ENCODE measurements at regions of chr2 and their contacts with region 1.

Region 1: DNA sequence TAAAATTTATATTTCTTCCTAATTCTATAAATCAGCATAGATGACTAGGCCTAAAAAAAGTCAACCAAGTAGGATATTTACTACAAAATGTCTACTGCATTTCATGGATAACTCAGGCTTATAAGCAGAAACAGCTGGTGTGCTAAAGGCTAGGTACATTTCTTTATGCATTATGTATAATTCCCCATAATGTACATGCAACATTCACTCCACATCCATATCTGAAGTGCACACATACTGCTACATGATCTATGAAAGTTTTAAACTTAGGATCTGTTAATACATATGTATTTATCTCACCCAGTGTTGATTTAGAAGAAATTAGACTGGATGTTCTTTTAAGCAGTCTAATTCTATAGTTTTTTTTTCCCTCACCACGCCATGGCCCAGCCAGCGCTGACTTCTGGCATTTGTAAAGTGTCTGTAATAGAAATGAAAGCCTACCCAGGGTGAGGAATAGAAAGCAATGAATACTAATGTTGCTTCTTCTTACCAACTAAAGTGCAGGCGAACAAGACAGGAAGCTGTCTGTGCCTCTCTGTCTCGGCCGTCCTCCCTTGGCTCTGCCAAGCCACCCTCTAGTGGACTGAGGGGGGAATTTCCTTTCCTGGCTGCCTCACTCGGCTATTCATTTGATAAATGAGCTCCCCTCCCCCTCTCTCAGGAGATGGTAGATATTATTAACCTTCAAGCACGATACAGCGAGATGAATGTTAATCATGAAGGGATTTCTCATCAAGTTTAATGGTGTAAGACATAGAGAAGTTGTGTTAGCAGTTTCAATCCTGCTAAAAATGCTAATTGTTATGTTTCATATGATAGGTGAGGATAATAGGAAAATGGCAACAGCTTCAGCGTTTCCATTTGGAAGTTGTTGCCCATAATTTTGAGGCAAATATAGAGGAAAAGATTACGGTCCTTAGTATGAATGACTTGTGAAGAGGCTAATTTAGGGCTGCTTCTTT is 384.5 kb downstream of the MTX2 start:
- DNase-seq: peak; percentile 98
- H3K4me3 ChIP-seq: peak overlapping the region; percentile 20
- H3K27ac ChIP-seq: peak overlapping the region; percentile 99
- H3K4me1 ChIP-seq: peaks cover 87% of the 10 kb centered on the region
- H3K27me3 ChIP-seq: no peaks in the 10 kb centered on the region
- CTCF ChIP-seq: peak; percentile 90

Region 2: DNA sequence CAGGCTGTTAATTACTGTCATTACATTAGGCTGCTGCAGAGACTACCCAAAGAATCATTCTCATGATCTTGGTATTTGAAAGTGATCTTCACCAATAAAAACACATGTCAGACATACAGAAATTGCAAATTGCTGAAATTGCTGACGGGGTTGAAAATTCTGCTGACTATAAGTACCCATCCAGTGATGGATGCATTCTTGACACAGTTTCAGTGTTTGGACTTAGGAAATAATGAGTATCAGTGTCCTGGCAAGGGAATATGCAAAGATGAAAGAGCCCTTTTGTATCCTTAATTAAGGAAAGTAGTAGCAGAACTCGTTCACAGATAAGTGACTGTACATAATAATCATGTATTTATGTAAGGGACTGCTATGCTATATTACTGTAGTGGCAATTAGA is 1251.2 kb before region 1 on chr2:
- CTCF ChIA-PET with region 1: no interaction called
- POLR2A ChIA-PET with region 1: interaction called, 11 read pairs
- intact Hi-C with region 1: loop called (anchors 1 kb)
- DNase-seq: peak; percentile 81
- H3K4me3 ChIP-seq: no peak overlapping the region
- H3K27ac ChIP-seq: peak overlapping the region; percentile 96
- H3K4me1 ChIP-seq: peaks cover 41% of the 10 kb centered on the region
- H3K27me3 ChIP-seq: no peaks in the 10 kb centered on the region
- CTCF ChIP-seq: no peak

Region 3: DNA sequence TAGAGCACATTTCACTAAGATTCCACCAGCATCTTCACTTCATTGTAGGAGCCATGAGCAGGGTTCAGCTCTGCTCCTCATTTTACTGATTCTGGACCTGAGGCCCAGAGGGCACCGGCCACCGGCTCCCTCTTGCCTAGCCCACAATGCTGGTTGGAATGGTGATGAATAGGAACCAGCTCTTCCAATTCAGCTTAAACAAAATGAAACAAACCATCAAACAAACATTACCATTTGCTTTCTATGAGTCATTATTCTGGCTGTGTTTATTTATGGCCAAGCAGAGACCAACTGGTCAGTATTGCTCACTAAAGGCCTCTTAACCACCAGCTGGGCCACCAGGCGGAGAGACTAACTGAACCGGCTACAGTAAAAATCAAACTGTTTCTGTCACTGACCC is 207.8 kb before region 1 on chr2:
- CTCF ChIA-PET with region 1: no interaction called
- POLR2A ChIA-PET with region 1: no interaction called
- intact Hi-C with region 1: no loop called
- DNase-seq: no peak
- H3K4me3 ChIP-seq: no peak overlapping the region
- H3K27ac ChIP-seq: no peak overlapping the region
- H3K4me1 ChIP-seq: peaks cover 6% of the 10 kb centered on the region
- H3K27me3 ChIP-seq: no peaks in the 10 kb centered on the region
- CTCF ChIP-seq: no peak

Region 4: DNA sequence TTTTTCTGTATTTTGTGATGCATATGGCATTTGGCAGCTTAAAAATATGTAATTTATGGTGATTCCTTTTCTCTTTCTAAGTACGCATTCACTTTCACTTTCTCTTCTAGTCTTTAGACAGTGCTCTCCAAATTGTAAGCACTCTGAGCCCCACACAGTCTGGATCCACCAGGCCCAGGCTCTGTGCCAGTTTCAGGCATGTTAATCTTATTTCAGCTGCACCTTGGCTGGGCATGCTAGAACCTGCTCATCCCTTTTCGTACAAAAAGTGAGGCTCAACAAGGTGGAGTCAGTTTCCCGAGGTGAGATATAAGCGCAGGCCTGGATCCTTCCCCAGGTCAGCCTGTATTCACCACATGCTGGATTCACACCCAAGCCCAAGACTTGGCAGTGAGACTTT is 180.6 kb before region 1 on chr2:
- CTCF ChIA-PET with region 1: no interaction called
- POLR2A ChIA-PET with region 1: no interaction called
- intact Hi-C with region 1: no loop called
- DNase-seq: peak; percentile 63
- H3K4me3 ChIP-seq: peak overlapping the region; percentile 1
- H3K27ac ChIP-seq: no peak overlapping the region
- H3K4me1 ChIP-seq: no peaks in the 10 kb centered on the region
- H3K27me3 ChIP-seq: no peaks in the 10 kb centered on the region
- CTCF ChIP-seq: no peak

Region 5: DNA sequence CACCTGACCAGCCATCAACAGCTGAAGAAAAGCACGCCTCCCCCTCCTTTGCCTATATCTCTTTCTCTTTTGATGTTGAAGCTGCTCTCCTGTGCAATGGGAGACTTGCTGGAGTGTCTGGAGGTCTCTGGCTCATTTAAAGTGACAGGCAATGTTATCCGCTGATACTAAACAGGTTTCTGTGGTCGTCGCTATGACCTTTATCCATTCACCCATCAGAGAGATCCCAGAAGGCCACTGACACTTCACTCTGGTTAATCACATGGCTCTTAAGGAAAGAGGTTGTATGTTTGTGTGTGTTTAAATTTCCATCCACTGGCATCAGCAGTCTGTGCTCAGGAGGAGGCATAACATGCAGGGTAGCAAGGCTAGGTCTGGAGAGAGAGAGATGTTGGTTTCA is 107.2 kb before region 1 on chr2:
- CTCF ChIA-PET with region 1: no interaction called
- POLR2A ChIA-PET with region 1: interaction called, 12 read pairs
- intact Hi-C with region 1: no loop called
- DNase-seq: no peak
- H3K4me3 ChIP-seq: no peak overlapping the region
- H3K27ac ChIP-seq: no peak overlapping the region
- H3K4me1 ChIP-seq: peaks cover 20% of the 10 kb centered on the region
- H3K27me3 ChIP-seq: no peaks in the 10 kb centered on the region
- CTCF ChIP-seq: no peak

Region 6: GRCh38 chr2:176692533-176692932 is 38.8 kb after region 1 on chr2:
- CTCF ChIA-PET with region 1: interaction called, 3 read pairs
- POLR2A ChIA-PET with region 1: interaction called, 11 read pairs
- intact Hi-C with region 1: loop called (anchors 1 kb)
- DNase-seq: no peak
- H3K4me3 ChIP-seq: no peak overlapping the region
- H3K27ac ChIP-seq: peak overlapping the region; percentile 41
- H3K4me1 ChIP-seq: peaks cover 81% of the 10 kb centered on the region
- H3K27me3 ChIP-seq: no peaks in the 10 kb centered on the region
- CTCF ChIP-seq: no peak

Region 7: GRCh38 chr2:176814306-176815052 is 160.7 kb after region 1 on chr2:
- CTCF ChIA-PET with region 1: interaction called, 21 read pairs
- POLR2A ChIA-PET with region 1: no interaction called
- intact Hi-C with region 1: loop called (anchors 1 kb)
- DNase-seq: peak; percentile 73
- H3K4me3 ChIP-seq: no peak overlapping the region
- H3K27ac ChIP-seq: peak overlapping the region; percentile 74
- H3K4me1 ChIP-seq: peaks cover 80% of the 10 kb centered on the region
- H3K27me3 ChIP-seq: no peaks in the 10 kb centered on the region
- CTCF ChIP-seq: peak; percentile 68

Region 8: GRCh38 chr2:177148477-177149154 is 494.9 kb after region 1 on chr2:
- CTCF ChIA-PET with region 1: interaction called, 14 read pairs
- POLR2A ChIA-PET with region 1: interaction called, 23 read pairs
- intact Hi-C with region 1: loop called (anchors 1 kb)
- DNase-seq: peak; percentile 96
- H3K4me3 ChIP-seq: peak overlapping the region; percentile 48
- H3K27ac ChIP-seq: peak overlapping the region; percentile 57
- H3K4me1 ChIP-seq: peaks cover 40% of the 10 kb centered on the region
- H3K27me3 ChIP-seq: no peaks in the 10 kb centered on the region
- CTCF ChIP-seq: peak; percentile 95